WTC11 (cell line): ENCODE measurements at regions of chr22 and their contacts with region 1.

Region 1: DNA sequence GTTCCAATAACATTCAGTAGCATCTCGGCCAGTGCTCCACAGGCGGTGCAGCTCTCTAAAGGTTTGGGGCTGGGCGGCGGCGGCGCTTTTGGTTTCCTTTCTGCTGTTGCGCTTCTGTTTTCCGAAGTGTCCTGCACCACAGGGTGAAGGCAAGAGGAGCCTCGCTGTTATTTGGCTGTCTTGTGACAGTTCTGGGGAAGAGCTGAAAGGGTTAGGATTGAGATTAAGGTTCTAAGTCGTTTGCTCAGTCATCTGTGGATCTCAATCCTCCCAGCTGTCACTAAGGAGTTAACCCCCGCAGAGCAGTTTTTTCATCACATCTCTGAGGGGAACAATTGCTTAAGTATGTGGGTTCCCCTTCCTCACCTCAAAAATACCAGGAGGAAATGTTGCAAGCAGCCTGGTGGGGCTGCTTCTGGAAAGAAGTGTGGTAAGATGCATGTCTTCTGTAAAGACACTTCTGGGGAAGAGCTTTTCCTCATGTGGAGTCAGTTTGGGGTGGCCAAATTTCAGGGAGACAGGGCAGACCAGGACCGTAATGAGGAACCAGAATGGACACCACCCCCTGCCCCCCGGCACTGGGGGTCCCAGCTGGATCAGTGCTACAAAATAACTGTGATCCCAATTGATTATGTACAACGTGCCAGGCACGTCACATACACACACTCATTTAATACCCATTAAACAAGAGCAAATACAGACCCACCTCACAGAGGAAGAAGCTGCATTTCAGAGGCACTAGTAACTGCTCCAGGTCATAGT is 14.2 kb downstream of the TMEM121B start:
- DNase-seq: no peak
- ATAC-seq: no peak
- H3K4me3 Mint-ChIP-seq: no peak overlapping the region
- H3K27ac Mint-ChIP-seq: no peak overlapping the region
- H3K4me1 Mint-ChIP-seq: peaks cover 4% of the 10 kb centered on the region; the same call in 1 of the 2 replicates
- H3K27me3 Mint-ChIP-seq: no peaks in the 10 kb centered on the region
- CTCF ChIP-seq: no peak

Region 2: GRCh38 chr22:17077255-17077654 is 29.7 kb before region 1 on chr22:
- CTCF ChIA-PET with region 1: interaction called, 12 read pairs
- POLR2A ChIA-PET with region 1: no interaction called
- DNase-seq: no peak
- ATAC-seq: no peak
- H3K4me3 Mint-ChIP-seq: no peak overlapping the region
- H3K27ac Mint-ChIP-seq: no peak overlapping the region
- H3K4me1 Mint-ChIP-seq: no peaks in the 10 kb centered on the region; the same call in 1 of the 2 replicates
- H3K27me3 Mint-ChIP-seq: no peaks in the 10 kb centered on the region
- CTCF ChIP-seq: no peak